Naive thymus-derived CD4-positive, alpha-beta T cell (primary cell): ENCODE measurements at regions of chr22 and their contacts with region 1.

Region 1: GRCh38 chr22:40463017-40463631 is 92.7 kb downstream of the SGSM3 start:
- DNase-seq: peak in 8 of 9 donors; percentile 36 to 65 (median 50)
- ATAC-seq: peak; percentile 88
- H3K4me3 ChIP-seq: peak overlapping the region; percentile 90
- H3K4me3 Mint-ChIP-seq: peak overlapping the region; percentile 87 to 97 (median 96)
- H3K27ac ChIP-seq: peak overlapping the region; percentile 80
- H3K27ac Mint-ChIP-seq: peak overlapping the region; percentile 93 to 99 (median 97)
- H3K4me1 ChIP-seq: peaks cover 41 to 53% of the 10 kb centered on the region in 2 donors
- H3K4me1 Mint-ChIP-seq: peaks cover 46 to 92% (median 76%) of the 10 kb centered on the region in 7 donors
- H3K27me3 ChIP-seq: no peaks in the 10 kb centered on the region
- H3K27me3 Mint-ChIP-seq: no peaks in the 10 kb centered on the region

Region 2: GRCh38 chr22:39900306-39901227 is 562.6 kb before region 1 on chr22 and contains the start of gene GRAP2:
- CTCF ChIA-PET with region 1: no interaction called
- POLR2A ChIA-PET with region 1: no interaction called
- intact Hi-C with region 1: no loop called
- DNase-seq: peak in 8 of 9 donors; percentile 52 to 90 (median 86)
- ATAC-seq: peak; percentile 98
- H3K4me3 ChIP-seq: peak within 1 kb of the TSS; percentile 71
- H3K4me3 Mint-ChIP-seq: peak within 1 kb of the TSS in 9 of 10 donors; percentile 95 to 99 (median 97)
- H3K27ac ChIP-seq: peak within 1 kb of the TSS; percentile 83
- H3K27ac Mint-ChIP-seq: peak within 1 kb of the TSS in 6 of 9 donors; percentile 86 to 99 (median 96)
- H3K4me1 ChIP-seq: peaks cover 23 to 27% of the 10 kb centered on the region in 2 donors
- H3K4me1 Mint-ChIP-seq: peaks cover 13 to 31% (median 22%) of the 10 kb centered on the region in 7 donors
- H3K27me3 ChIP-seq: no peaks in the 10 kb centered on the region
- H3K27me3 Mint-ChIP-seq: no peaks in the 10 kb centered on the region
- total RNA-seq, gene GRAP2: 108 to 156 (median 145) TPM

Region 3: GRCh38 chr22:40094485-40094884 is 368.6 kb before region 1 on chr22:
- CTCF ChIA-PET with region 1: no interaction called
- POLR2A ChIA-PET with region 1: no interaction called
- intact Hi-C with region 1: no loop called
- DNase-seq: peak in 1 of 9 donors; percentile 27
- ATAC-seq: peak; percentile 44
- H3K4me3 ChIP-seq: no peak overlapping the region
- H3K4me3 Mint-ChIP-seq: peak overlapping the region; percentile 0 to 79 (median 66)
- H3K27ac ChIP-seq: no peak overlapping the region
- H3K27ac Mint-ChIP-seq: peak overlapping the region in 8 of 9 donors; percentile 6 to 87 (median 54)
- H3K4me1 ChIP-seq: peaks cover 9 to 61% of the 10 kb centered on the region in 2 donors
- H3K4me1 Mint-ChIP-seq: peaks cover 46 to 90% (median 76%) of the 10 kb centered on the region in 7 donors
- H3K27me3 ChIP-seq: no peaks in the 10 kb centered on the region
- H3K27me3 Mint-ChIP-seq: no peaks in the 10 kb centered on the region

Region 4: DNA sequence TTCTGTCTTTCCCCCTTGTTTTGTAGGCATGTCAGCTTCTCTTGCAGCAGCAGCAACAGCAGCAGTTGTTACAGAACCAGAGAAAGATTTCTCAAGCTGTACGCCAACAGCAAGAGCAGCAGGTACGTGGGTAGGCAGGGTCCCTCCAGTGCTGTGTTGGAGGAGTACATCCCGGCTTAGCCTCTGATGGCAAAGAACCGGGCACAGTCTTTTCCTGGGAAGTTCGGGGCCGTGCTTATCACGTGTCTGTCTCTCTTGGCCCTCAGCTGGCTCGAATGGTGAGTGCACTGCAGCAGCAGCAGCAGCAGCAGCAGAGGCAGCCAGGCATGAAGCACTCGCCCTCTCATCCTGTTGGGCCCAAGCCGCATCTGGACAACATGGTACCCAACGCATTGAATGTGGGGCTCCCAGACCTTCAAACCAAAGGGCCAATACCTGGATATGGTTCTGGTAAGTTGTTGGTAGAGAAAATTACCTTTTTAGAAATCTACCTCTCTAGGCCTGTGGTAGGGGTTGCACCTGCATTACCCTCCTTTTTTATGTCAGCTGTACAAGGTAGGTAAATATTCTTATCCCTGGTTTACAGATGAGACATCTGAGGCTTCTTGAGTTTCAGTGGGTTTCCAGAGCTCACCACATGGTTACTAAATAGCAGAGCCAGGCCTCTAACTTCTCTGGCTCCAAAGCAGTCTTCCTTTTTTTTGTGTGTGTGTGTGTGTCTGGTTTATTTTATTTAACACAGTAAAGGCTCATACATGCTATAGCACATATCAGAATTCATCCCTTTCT is 162.0 kb before region 1 on chr22:
- CTCF ChIA-PET with region 1: no interaction called
- POLR2A ChIA-PET with region 1: no interaction called
- intact Hi-C with region 1: no loop called
- DNase-seq: no peak
- ATAC-seq: no peak
- H3K4me3 ChIP-seq: no peak overlapping the region
- H3K4me3 Mint-ChIP-seq: no peak overlapping the region
- H3K27ac ChIP-seq: no peak overlapping the region
- H3K27ac Mint-ChIP-seq: peak overlapping the region in 4 of 9 donors; percentile 15 to 58 (median 44)
- H3K4me1 ChIP-seq: no peaks in the 10 kb centered on the region
- H3K4me1 Mint-ChIP-seq: peaks cover 6 to 37% (median 24%) of the 10 kb centered on the region in 7 donors
- H3K27me3 ChIP-seq: no peaks in the 10 kb centered on the region
- H3K27me3 Mint-ChIP-seq: no peaks in the 10 kb centered on the region

Region 5: GRCh38 chr22:40385036-40385782 is 77.9 kb before region 1 on chr22:
- CTCF ChIA-PET with region 1: no interaction called
- POLR2A ChIA-PET with region 1: no interaction called
- intact Hi-C with region 1: loop called in 1 of 2 experiments (anchors 5 kb)
- DNase-seq: peak in 7 of 9 donors; percentile 51 to 78 (median 73)
- ATAC-seq: peak; percentile 96
- H3K4me3 ChIP-seq: peak overlapping the region; percentile 62
- H3K4me3 Mint-ChIP-seq: peak overlapping the region; percentile 76 to 90 (median 86)
- H3K27ac ChIP-seq: peak overlapping the region; percentile 78
- H3K27ac Mint-ChIP-seq: peak overlapping the region; percentile 90 to 99 (median 97)
- H3K4me1 ChIP-seq: peaks cover 10 to 61% of the 10 kb centered on the region in 2 donors
- H3K4me1 Mint-ChIP-seq: peaks cover 37 to 79% (median 71%) of the 10 kb centered on the region in 7 donors
- H3K27me3 ChIP-seq: no peaks in the 10 kb centered on the region
- H3K27me3 Mint-ChIP-seq: no peaks in the 10 kb centered on the region

Region 6: GRCh38 chr22:40443732-40444131 is 19.4 kb before region 1 on chr22:
- CTCF ChIA-PET with region 1: interaction called, 4 read pairs
- POLR2A ChIA-PET with region 1: interaction called, 42 read pairs
- intact Hi-C with region 1: loop called in 1 of 2 experiments (anchors 2 kb)
- DNase-seq: no peak
- ATAC-seq: peak; percentile 50
- H3K4me3 ChIP-seq: no peak overlapping the region
- H3K4me3 Mint-ChIP-seq: peak overlapping the region in 3 of 10 donors; percentile 9 to 69 (median 15)
- H3K27ac ChIP-seq: peak overlapping the region; percentile 35
- H3K27ac Mint-ChIP-seq: peak overlapping the region in 8 of 9 donors; percentile 38 to 88 (median 68)
- H3K4me1 ChIP-seq: peaks cover 0 to 29% of the 10 kb centered on the region in 2 donors
- H3K4me1 Mint-ChIP-seq: peaks cover 52 to 94% (median 83%) of the 10 kb centered on the region in 7 donors
- H3K27me3 ChIP-seq: no peaks in the 10 kb centered on the region
- H3K27me3 Mint-ChIP-seq: no peaks in the 10 kb centered on the region

Region 7: GRCh38 chr22:40449676-40450035 is 13.5 kb before region 1 on chr22:
- CTCF ChIA-PET with region 1: interaction called, 3 read pairs
- POLR2A ChIA-PET with region 1: interaction called, 42 read pairs
- intact Hi-C with region 1: loop called in 1 of 2 experiments (anchors 1 kb)
- DNase-seq: no peak
- ATAC-seq: no peak
- H3K4me3 ChIP-seq: no peak overlapping the region
- H3K4me3 Mint-ChIP-seq: peak overlapping the region in 8 of 10 donors; percentile 18 to 82 (median 72)
- H3K27ac ChIP-seq: no peak overlapping the region
- H3K27ac Mint-ChIP-seq: peak overlapping the region in 8 of 9 donors; percentile 51 to 96 (median 88)
- H3K4me1 ChIP-seq: peaks cover 19 to 62% of the 10 kb centered on the region in 2 donors
- H3K4me1 Mint-ChIP-seq: peaks cover 58 to 96% (median 85%) of the 10 kb centered on the region in 7 donors
- H3K27me3 ChIP-seq: no peaks in the 10 kb centered on the region
- H3K27me3 Mint-ChIP-seq: no peaks in the 10 kb centered on the region

Region 8: GRCh38 chr22:40473703-40474102 is 10.6 kb after region 1 on chr22:
- CTCF ChIA-PET with region 1: interaction called, 9 read pairs
- POLR2A ChIA-PET with region 1: interaction called, 15 read pairs
- intact Hi-C with region 1: loop called in 1 of 2 experiments (anchors 2 kb)
- DNase-seq: no peak
- ATAC-seq: no peak
- H3K4me3 ChIP-seq: no peak overlapping the region
- H3K4me3 Mint-ChIP-seq: no peak overlapping the region
- H3K27ac ChIP-seq: no peak overlapping the region
- H3K27ac Mint-ChIP-seq: peak overlapping the region in 1 of 9 donors; percentile 3
- H3K4me1 ChIP-seq: no peaks in the 10 kb centered on the region
- H3K4me1 Mint-ChIP-seq: peaks cover 20 to 50% (median 36%) of the 10 kb centered on the region in 7 donors
- H3K27me3 ChIP-seq: no peaks in the 10 kb centered on the region
- H3K27me3 Mint-ChIP-seq: no peaks in the 10 kb centered on the region

Region 9: GRCh38 chr22:40479126-40479800 is 16.1 kb after region 1 on chr22:
- CTCF ChIA-PET with region 1: interaction called, 9 read pairs
- POLR2A ChIA-PET with region 1: interaction called, 6 read pairs
- intact Hi-C with region 1: loop called in 1 of 2 experiments (anchors 2 kb)
- DNase-seq: no peak
- ATAC-seq: no peak
- H3K4me3 ChIP-seq: no peak overlapping the region
- H3K4me3 Mint-ChIP-seq: no peak overlapping the region
- H3K27ac ChIP-seq: no peak overlapping the region
- H3K27ac Mint-ChIP-seq: peak overlapping the region in 2 of 9 donors; percentile 48 to 59
- H3K4me1 ChIP-seq: peaks cover 0 to 5% of the 10 kb centered on the region in 2 donors
- H3K4me1 Mint-ChIP-seq: peaks cover 31 to 60% (median 47%) of the 10 kb centered on the region in 7 donors
- H3K27me3 ChIP-seq: no peaks in the 10 kb centered on the region
- H3K27me3 Mint-ChIP-seq: no peaks in the 10 kb centered on the region

Region 10: GRCh38 chr22:40487663-40488249 is 24.6 kb after region 1 on chr22:
- CTCF ChIA-PET with region 1: interaction called, 7 read pairs
- POLR2A ChIA-PET with region 1: interaction called, 5 read pairs
- intact Hi-C with region 1: loop called (anchors 1 to 2 kb)
- DNase-seq: peak in 7 of 9 donors; percentile 14 to 51 (median 34)
- ATAC-seq: peak; percentile 71
- H3K4me3 ChIP-seq: no peak overlapping the region
- H3K4me3 Mint-ChIP-seq: no peak overlapping the region
- H3K27ac ChIP-seq: no peak overlapping the region
- H3K27ac Mint-ChIP-seq: peak overlapping the region in 6 of 9 donors; percentile 0 to 29 (median 10)
- H3K4me1 ChIP-seq: peaks cover 0 to 32% of the 10 kb centered on the region in 2 donors
- H3K4me1 Mint-ChIP-seq: peaks cover 30 to 62% (median 52%) of the 10 kb centered on the region in 7 donors
- H3K27me3 ChIP-seq: no peaks in the 10 kb centered on the region
- H3K27me3 Mint-ChIP-seq: no peaks in the 10 kb centered on the region

Region 11: DNA sequence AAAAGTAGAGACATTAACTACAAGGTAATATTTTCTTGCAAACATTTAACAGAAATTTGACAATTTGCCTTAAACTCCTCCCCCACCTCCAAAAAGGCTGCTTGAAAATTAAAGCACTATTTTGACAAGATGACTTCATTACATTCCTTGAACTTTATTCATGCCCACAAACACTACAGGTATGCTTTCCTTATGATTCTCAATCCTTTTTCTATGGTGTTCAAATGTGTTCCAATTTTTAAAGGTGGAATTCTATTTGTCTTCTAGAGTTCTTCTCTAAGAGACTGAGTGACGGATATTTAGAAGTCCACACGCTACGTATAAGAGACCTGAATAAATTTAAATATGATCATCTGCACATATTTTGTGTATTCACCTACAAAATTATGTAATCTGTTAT is 104.0 kb after region 1 on chr22:
- CTCF ChIA-PET with region 1: no interaction called
- POLR2A ChIA-PET with region 1: no interaction called
- intact Hi-C with region 1: no loop called
- DNase-seq: no peak
- ATAC-seq: no peak
- H3K4me3 ChIP-seq: no peak overlapping the region
- H3K4me3 Mint-ChIP-seq: no peak overlapping the region
- H3K27ac ChIP-seq: no peak overlapping the region
- H3K27ac Mint-ChIP-seq: no peak overlapping the region
- H3K4me1 ChIP-seq: no peaks in the 10 kb centered on the region
- H3K4me1 Mint-ChIP-seq: peaks cover 0 to 43% (median 31%) of the 10 kb centered on the region in 7 donors
- H3K27me3 ChIP-seq: no peaks in the 10 kb centered on the region
- H3K27me3 Mint-ChIP-seq: no peaks in the 10 kb centered on the region